ENCODE measurements at regions of chr12 and their contacts with region 1.

Region 1: DNA sequence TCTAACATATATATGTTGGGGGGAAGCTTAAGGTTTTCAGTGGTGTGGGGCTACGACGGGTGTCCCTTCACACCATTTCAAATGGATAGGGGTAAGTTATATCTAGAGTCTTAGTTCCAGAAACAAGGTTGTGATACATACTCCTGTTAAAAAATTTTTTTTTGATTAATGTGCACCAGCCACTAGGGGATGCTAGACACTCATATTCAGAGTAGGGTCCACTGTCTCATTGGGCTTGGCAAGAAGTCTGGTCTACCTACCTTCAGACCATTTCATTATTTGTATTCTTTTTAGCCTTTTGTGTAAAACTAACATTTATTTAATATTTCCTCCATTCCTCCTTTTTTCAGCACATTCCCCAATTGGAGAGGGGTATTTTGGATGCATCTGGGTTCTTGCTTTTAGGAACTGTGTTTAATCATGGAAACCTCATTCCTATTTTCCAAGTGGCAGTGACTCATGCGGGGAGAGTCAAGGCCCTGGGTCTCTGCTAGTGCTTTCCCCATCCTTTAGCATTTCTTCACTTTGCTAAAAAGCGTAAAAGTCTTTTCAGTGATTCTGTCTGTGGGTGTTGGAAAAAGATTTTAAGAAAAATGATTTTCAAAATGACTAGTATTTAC is 33.4 kb downstream of the ANO4 start:
- DNase-seq: no peak
- H3K4me3 ChIP-seq: no peak overlapping the region
- H3K27ac ChIP-seq: no peak overlapping the region
- H3K4me1 ChIP-seq: no peaks in the 10 kb centered on the region
- H3K27me3 ChIP-seq: no peaks in the 10 kb centered on the region
- CTCF ChIP-seq: peak; percentile 37 to 40

Region 2: GRCh38 chr12:101323255-101323654 is 495.2 kb after region 1 on chr12:
- intact Hi-C with region 1: loop called (anchors 5 kb)
- DNase-seq: no peak
- H3K4me3 ChIP-seq: no peak overlapping the region
- H3K27ac ChIP-seq: no peak overlapping the region
- H3K4me1 ChIP-seq: no peaks in the 10 kb centered on the region
- H3K27me3 ChIP-seq: no peaks in the 10 kb centered on the region
- CTCF ChIP-seq: no peak

Measured in tibial artery (tissue), 4 donors.